Common myeloid progenitor, CD34-positive (primary cell): ENCODE measurements at regions of chr9 and their contacts with region 1.

Region 1: DNA sequence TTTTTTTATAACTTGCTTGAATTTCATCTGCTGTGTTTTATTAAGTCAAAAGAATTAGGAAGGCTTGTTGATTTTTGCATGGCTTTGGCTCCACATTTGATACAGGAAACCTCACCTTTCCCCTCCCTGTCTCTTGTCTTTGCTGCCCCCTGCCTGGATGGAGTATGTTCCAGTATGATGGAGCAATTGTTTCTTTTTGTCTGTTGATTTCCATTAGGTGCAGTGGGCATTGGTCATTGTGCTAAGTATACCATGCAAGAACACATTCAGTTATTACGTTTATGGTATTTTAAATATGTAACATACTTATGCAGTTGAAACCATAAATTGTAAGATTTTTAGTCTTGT is 19.6 kb downstream of the TJP2 start:
- DNase-seq: peak in 1 of 3 donors; percentile 22
- H3K4me3 ChIP-seq: no peak overlapping the region
- H3K27ac ChIP-seq: no peak overlapping the region
- H3K4me1 ChIP-seq: peaks cover 2 to 25% (median 13%) of the 10 kb centered on the region in 4 experiments
- H3K27me3 ChIP-seq: no peaks in the 10 kb centered on the region

Region 2: GRCh38 chr9:69149321-69149807 is 44.3 kb before region 1 on chr9:
- CTCF ChIA-PET with region 1: interaction called, 11 read pairs
- POLR2A ChIA-PET with region 1: no interaction called
- DNase-seq: peak; percentile 36 to 64 (median 60)
- H3K4me3 ChIP-seq: peak overlapping the region in 2 of 7 experiments; percentile 16 to 59
- H3K27ac ChIP-seq: no peak overlapping the region
- H3K4me1 ChIP-seq: peaks cover 2 to 9% (median 6%) of the 10 kb centered on the region in 4 experiments
- H3K27me3 ChIP-seq: no peaks in the 10 kb centered on the region

Region 3: DNA sequence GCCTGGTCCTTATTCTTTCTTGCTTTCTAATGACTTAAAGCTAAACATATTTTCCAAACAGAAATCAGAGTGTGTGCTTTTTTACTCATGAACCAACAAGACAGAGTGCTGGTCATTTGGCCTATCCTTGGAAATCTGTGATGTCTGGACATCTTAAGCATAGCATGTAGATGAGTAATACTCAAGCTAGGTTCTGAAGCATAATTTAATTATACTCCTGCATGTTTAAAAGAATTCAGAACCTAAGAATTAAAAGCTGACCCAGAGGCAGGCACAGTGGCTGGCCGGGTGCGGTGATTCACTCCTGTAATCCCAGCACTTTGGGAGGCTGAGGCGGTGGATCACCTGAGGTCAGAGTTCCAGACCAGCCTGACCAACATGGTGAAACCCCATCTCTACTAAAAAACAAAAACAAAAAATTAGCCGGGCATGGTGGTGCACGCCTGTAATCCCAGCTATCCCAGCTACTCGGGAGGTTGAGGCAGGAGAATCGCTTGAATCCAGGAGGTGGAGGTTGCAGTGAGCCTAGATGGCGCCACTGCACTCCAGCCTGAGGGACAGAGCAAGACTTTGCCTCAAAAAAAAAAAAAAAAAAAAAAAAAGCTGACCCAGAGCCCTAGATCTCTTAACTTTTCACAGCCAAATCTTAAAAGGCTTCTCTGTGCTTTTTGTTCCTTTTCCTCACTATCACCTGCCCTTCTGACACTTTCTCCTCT is 35.8 kb before region 1 on chr9:
- CTCF ChIA-PET with region 1: interaction called, 23 read pairs
- POLR2A ChIA-PET with region 1: no interaction called
- DNase-seq: no peak
- H3K4me3 ChIP-seq: no peak overlapping the region
- H3K27ac ChIP-seq: no peak overlapping the region
- H3K4me1 ChIP-seq: no peaks in the 10 kb centered on the region
- H3K27me3 ChIP-seq: no peaks in the 10 kb centered on the region

Region 4: DNA sequence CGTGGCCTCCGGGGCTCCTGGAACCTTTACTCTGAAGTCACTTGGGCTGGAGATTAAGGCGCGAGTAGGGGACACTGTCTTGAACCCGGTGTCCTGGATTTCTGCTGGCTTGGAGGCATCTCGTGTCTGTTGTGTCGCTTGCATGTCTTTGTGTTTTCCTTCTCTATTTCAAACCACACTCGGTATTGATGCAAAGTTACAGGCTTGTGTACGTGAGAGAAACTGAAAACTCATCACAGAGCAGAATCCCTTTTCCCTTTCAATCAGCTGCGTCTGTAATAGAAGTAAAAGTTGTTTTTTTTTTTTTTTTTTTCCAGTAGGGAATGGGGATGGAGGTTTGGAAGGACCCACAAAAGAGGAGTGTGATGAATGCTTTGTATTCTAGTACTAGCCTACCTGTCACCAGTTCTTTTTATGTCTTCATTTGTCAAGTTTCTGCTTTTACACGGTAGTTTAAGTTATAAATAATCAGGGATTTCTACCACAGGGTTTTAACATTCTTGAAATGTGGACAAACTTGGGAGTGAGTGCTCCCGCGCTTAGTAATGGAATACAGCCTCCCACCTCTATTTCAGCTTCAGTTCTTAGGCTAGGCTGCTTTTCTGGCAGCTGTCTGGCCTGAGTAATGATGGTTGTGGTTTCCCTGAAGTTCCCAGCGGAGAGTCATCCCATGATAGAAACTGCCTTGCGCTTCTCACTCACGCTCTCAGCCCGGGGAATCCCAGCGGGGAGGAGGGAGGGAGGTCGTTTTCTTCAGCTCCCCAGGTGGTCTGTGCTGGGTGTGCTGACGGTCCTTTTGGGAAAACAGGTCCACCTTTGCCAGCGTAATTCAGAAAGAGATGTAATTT is 18.8 kb before region 1 on chr9:
- CTCF ChIA-PET with region 1: interaction called, 17 read pairs
- POLR2A ChIA-PET with region 1: no interaction called
- DNase-seq: peak; percentile 57 to 81 (median 81)
- H3K4me3 ChIP-seq: peak overlapping the region; percentile 61 to 89 (median 80)
- H3K27ac ChIP-seq: peak overlapping the region in 1 of 2 experiments; percentile 46
- H3K4me1 ChIP-seq: peaks cover 2 to 52% (median 35%) of the 10 kb centered on the region in 4 experiments
- H3K27me3 ChIP-seq: no peaks in the 10 kb centered on the region

Region 5: DNA sequence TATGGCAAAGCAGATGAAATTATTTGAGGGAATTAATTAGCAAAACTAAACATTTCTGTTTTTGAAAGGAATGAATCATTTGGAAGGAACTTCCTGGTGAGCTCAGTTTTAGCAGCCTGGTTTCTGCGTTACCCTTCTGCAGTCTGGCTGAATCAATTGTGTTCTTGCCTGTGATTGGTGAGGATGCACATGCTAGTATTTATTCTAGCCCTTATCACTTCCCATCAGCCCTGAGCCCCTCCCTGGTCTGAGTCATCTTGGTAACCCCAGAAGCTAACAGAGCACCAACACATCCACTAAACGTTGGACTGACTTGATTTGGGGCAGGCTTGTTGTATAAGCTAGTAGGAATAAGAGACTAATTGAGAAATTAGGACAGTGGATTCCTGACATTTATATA is 13.0 kb before region 1 on chr9:
- CTCF ChIA-PET with region 1: interaction called, 17 read pairs
- POLR2A ChIA-PET with region 1: interaction called, 3 read pairs
- DNase-seq: peak; percentile 89 to 97 (median 95)
- H3K4me3 ChIP-seq: peak overlapping the region in 3 of 7 experiments; percentile 34 to 44 (median 35)
- H3K27ac ChIP-seq: peak overlapping the region; percentile 59 to 79
- H3K4me1 ChIP-seq: peaks cover 3 to 41% (median 16%) of the 10 kb centered on the region in 4 experiments
- H3K27me3 ChIP-seq: no peaks in the 10 kb centered on the region

Region 6: DNA sequence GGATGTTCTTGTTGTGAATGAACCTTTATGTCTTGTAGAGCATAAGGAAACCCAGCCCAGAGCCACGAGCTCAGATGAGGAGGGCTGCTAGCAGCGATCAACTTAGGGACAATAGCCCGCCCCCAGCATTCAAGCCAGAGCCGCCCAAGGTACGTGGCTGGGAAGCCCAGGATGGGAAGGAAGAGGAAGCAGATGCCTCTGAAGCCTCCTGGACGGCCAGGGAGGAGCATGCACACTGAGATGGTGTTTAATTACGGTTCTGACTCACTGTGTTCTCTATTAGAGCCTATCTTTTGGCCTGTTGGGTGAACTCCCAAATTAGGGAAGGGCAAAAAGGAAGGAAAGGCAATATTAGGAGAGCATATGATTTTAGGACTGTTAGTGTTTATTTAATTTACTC is 55.7 kb after region 1 on chr9:
- CTCF ChIA-PET with region 1: no interaction called
- POLR2A ChIA-PET with region 1: no interaction called
- DNase-seq: no peak
- H3K4me3 ChIP-seq: no peak overlapping the region
- H3K27ac ChIP-seq: no peak overlapping the region
- H3K4me1 ChIP-seq: no peaks in the 10 kb centered on the region
- H3K27me3 ChIP-seq: no peaks in the 10 kb centered on the region